ENCODE measurements at regions of chr9 and their contacts with region 1.

Region 1: GRCh38 chr9:35111001-35111933 is 4.4 kb downstream of the ATOSB start:
- DNase-seq: peak; percentile 98
- H3K4me3 ChIP-seq: peak overlapping the region; percentile 45 to 85 (median 60)
- H3K27ac ChIP-seq: peak overlapping the region; percentile 92
- H3K4me1 ChIP-seq: peaks cover 47% of the 10 kb centered on the region
- H3K27me3 ChIP-seq: no peaks in the 10 kb centered on the region
- CTCF ChIP-seq: no peak
- POLR2A ChIP-seq: peak; percentile 72

Region 2: DNA sequence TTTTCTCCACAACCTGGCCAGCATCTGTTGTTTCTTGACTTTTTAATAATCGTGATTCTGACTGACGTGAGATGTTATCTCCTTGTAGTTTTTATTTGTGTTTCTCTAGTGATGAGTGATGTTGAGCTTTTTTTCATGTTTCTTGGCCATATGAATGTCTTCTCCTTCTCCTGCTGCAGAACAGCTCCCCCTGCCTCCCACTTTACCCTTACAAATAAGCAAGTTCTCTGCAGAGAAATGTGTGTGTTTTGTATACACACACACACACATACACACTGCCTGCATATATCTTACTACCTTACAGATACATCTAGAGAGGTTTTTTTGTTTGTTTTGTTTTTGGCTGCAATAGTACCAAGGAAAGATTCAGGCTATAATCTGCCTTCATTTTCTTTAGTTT is 241.9 kb before region 1 on chr9:
- CTCF ChIA-PET with region 1: no interaction called
- POLR2A ChIA-PET with region 1: no interaction called
- dilution Hi-C with region 1: no loop called
- intact Hi-C with region 1: no loop called
- DNase-seq: peak; percentile 19
- H3K4me3 ChIP-seq: no peak overlapping the region
- H3K27ac ChIP-seq: no peak overlapping the region
- H3K4me1 ChIP-seq: no peaks in the 10 kb centered on the region
- H3K27me3 ChIP-seq: peaks cover 6 to 7% of the 10 kb centered on the region in 2 experiments
- CTCF ChIP-seq: peak in 1 of 2 donors; percentile 17
- POLR2A ChIP-seq: no peak

Region 3: DNA sequence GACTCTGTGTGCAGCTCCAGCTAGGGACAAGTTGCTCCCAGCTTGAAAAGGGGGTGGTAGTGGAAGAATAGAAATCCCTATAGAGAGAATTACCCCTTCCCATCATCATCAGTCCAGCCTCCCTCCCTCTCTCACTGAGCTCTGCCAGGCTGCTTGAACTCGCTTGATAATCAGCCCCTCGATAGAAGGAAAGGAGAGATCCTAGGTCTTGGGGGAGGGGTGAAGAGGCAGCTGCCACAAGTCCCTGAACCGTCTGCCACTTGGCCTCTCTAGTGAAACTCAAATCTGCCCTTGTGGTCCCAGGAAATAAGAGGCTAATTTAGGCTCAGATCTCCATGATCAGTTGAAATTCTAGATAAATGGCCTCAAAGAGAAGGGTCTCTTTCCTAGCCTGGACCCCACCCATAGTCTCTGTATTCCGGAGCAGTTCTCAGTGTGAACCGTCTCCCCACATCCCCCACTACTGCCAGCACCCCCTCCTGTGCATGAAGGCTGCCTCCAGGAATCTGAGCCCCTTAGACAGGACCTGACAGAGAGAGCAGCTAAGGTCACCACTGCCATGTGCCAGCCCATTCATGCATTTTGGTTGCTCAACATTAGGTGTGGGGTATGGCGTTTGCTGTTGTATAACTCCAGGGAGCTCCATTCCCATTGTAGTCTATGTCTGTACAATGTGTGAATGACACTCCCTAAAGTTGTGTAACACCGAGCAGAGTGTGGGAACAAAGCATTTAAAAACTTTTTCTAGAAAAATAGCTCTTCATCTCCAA is 116.2 kb before region 1 on chr9:
- CTCF ChIA-PET with region 1: no interaction called
- POLR2A ChIA-PET with region 1: no interaction called
- dilution Hi-C with region 1: no loop called
- intact Hi-C with region 1: no loop called
- DNase-seq: no peak
- H3K4me3 ChIP-seq: no peak overlapping the region
- H3K27ac ChIP-seq: no peak overlapping the region
- H3K4me1 ChIP-seq: peaks cover 42% of the 10 kb centered on the region
- H3K27me3 ChIP-seq: no peaks in the 10 kb centered on the region
- CTCF ChIP-seq: no peak
- POLR2A ChIP-seq: no peak

Region 4: DNA sequence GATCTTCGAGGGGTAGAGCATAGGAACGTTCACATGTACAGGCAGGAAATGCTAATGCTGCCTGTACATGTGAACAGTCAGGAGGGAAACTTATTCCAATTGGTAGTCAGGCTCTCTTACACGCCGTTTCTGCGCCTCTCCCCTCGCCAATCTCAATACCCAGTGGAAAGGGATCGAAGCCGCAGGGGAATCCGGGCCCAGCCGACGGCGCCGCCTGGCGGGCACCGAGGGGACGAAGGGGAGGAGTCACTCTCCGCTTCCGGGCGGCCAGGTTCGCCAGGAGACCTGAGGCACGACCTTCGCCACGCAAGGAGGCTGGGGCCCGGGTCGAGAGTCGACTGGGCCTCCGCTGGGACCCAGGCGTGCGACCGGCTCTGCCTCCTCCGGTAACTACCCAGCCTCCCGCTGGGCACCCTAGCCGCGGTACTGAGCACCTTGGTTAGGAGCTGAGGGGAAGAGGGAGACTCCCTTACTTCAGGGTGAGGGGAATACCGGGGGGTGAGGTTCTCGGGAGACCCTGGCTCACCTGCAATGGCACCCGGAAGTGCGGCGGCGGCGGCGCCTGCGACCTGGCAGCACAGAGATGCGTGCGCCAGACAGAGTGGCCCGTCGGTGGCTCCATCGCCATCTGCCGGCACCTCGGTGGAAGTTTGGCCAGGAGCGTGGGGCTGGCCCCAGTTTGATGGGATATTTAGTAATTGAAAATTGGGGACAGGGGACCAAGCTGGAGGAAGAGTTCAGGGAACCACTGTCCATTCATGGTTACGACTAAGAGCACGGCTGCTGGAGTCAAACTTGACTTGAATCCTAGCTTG is 15.0 kb before region 1 on chr9 and contains the start of gene PIGO:
- CTCF ChIA-PET with region 1: interaction called, 11 read pairs
- POLR2A ChIA-PET with region 1: no interaction called
- dilution Hi-C with region 1: no loop called
- intact Hi-C with region 1: loop called (anchors 1 kb)
- DNase-seq: peak; percentile 78
- H3K4me3 ChIP-seq: peak within 1 kb of the TSS; percentile 69 to 93 (median 74)
- H3K27ac ChIP-seq: peak within 1 kb of the TSS; percentile 85
- H3K4me1 ChIP-seq: peaks cover 2% of the 10 kb centered on the region
- H3K27me3 ChIP-seq: no peaks in the 10 kb centered on the region
- CTCF ChIP-seq: peak; percentile 77 to 99
- POLR2A ChIP-seq: peak; percentile 46
- total RNA-seq, gene PIGO: 17.7 and 23.5 TPM in 2 replicates

Region 5: GRCh38 chr9:35161713-35162604 is 50.7 kb after region 1 on chr9 and contains the start of gene UNC13B:
- CTCF ChIA-PET with region 1: interaction called, 39 read pairs
- POLR2A ChIA-PET with region 1: interaction called, 7 read pairs
- dilution Hi-C with region 1: no loop called
- intact Hi-C with region 1: loop called (anchors 1 kb)
- DNase-seq: peak; percentile 96
- H3K4me3 ChIP-seq: peak within 1 kb of the TSS; percentile 86 to 95 (median 94)
- H3K27ac ChIP-seq: peak within 1 kb of the TSS; percentile 70
- H3K4me1 ChIP-seq: peaks cover 34% of the 10 kb centered on the region
- H3K27me3 ChIP-seq: no peaks in the 10 kb centered on the region
- CTCF ChIP-seq: no peak
- POLR2A ChIP-seq: peak; percentile 96
- total RNA-seq, gene UNC13B: 44.2 and 46.2 TPM in 2 replicates

Region 6: DNA sequence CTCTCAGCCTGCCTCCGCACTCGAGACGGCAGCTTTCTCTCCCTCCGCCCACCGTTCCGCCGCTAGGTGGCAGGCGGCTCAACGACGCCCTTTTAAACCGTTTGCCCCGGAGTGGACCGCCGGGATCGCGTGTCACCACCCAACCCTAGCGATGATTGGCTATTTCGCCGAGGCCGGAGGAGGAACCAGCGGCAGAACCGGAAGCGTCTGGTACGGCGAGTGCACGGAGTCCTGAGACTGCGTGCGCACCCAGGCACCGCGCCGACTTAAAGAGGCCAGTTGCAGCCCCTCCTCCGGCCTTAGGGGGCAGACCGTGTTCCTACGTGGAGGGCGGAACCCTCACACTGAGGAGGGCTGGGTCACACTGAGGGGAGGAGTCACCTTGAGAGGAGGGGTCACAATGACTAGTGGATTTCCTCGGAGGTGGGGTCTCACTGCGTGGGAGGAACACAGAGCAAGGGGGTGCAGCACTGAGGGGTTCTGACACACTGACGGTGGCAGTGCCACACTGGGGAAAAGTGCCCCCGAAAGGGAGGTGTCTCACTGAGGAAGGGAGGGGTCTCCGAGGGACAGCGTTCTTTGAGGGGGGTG is 492.8 kb after region 1 on chr9:
- CTCF ChIA-PET with region 1: no interaction called
- POLR2A ChIA-PET with region 1: no interaction called
- dilution Hi-C with region 1: no loop called
- intact Hi-C with region 1: loop called (anchors 5 kb)
- DNase-seq: peak; percentile 100
- H3K4me3 ChIP-seq: peak overlapping the region; percentile 0 to 41 (median 27)
- H3K27ac ChIP-seq: no peak overlapping the region
- H3K4me1 ChIP-seq: peaks cover 16% of the 10 kb centered on the region
- H3K27me3 ChIP-seq: peaks cover 0 to 2% of the 10 kb centered on the region in 2 experiments
- CTCF ChIP-seq: peak; percentile 88 to 99
- POLR2A ChIP-seq: no peak

Measured in endothelial cell of umbilical vein (primary cell).